Astrocyte of the cerebellum (primary cell): ENCODE measurements at regions of chr12 and their contacts with region 1.

Region 1: GRCh38 chr12:120849765-120850164 is 54.4 kb downstream of the SPPL3 start:
- DNase-seq: no peak
- H3K4me3 ChIP-seq: no peak overlapping the region
- CTCF ChIP-seq: no peak

Region 2: GRCh38 chr12:120388691-120389481 is 460.9 kb before region 1 on chr12:
- in situ Hi-C with region 1: no loop called
- DNase-seq: no peak
- H3K4me3 ChIP-seq: no peak overlapping the region
- CTCF ChIP-seq: no peak

Region 3: DNA sequence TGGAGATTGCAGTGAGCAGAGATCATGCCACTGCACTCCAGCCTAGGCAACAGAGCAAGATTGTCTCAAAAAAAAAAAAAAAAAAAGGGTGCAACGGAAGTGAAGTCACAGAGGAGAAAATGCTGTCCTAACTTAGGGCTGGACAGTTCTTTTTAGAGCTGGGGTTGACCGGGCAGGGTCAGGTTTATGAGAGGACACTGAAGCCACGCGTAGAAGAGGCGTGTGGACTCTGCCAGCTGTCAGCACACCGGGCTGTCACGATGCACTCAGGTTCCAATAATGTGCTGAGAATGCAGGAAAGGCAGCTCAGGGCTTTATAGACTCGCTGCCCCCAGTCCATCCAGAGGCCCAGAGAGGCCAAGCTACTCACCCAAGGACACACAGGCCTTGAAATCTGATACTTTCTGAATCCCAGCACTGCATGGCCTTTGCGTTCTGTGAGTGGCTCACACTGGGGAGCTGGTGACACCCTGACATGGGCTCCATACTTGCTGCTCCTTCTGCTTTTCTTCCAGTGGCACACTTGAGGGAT is 83.3 kb after region 1 on chr12:
- in situ Hi-C with region 1: loop called (anchors 5 kb)
- DNase-seq: no peak
- H3K4me3 ChIP-seq: no peak overlapping the region
- CTCF ChIP-seq: no peak

Region 4: GRCh38 chr12:121181181-121181580 is 331.4 kb after region 1 on chr12:
- in situ Hi-C with region 1: no loop called
- DNase-seq: no peak
- H3K4me3 ChIP-seq: no peak overlapping the region
- CTCF ChIP-seq: no peak